ENCODE measurements at regions of chr4 and their contacts with region 1.

Region 1: DNA sequence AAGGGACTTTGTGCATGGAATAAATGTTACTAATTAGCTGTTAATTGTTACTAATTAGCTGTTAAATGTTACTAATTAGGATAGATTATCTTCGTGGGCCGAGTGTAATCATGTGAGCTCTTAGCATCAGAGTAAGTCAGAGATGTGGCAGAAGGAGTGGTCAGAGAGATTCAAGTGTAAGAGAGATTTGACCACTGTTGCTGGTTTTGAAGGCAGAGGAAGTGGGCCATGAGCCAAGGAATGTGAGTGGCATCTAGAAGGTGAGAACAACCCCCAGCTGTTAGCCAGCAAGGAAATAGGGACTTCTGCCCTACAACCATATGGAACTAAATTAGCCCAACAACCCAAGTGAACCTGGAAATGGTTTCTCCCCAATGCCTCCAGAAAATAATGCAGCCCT is 28.2 kb downstream of the ODAPH start:
- DNase-seq: no peak
- H3K4me3 ChIP-seq: no peak overlapping the region
- H3K27ac ChIP-seq: no peak overlapping the region
- H3K27me3 ChIP-seq: no peaks in the 10 kb centered on the region
- CTCF ChIP-seq: no peak

Region 2: DNA sequence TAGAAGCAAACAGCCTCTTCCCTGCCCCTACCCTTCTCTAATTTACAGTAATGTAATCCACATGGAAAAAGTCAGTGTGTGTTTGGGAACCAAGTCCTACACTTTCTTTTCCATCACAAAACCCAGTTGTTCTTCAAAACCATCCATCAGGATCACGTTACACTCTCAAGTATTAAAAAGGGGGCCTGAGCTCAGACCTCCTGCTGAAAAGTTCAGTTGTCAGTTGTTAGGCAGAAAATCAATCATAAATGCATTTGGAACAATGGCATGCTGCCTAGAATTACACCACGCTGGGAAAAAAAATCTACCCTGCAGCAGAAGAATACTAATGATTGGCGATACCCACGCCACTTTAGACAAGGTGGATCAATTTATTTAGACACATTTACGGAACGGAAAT is 414.6 kb before region 1 on chr4:
- intact Hi-C with region 1: no loop called
- DNase-seq: no peak
- H3K4me3 ChIP-seq: no peak overlapping the region
- H3K27ac ChIP-seq: no peak overlapping the region
- H3K27me3 ChIP-seq: no peaks in the 10 kb centered on the region
- CTCF ChIP-seq: no peak

Region 3: GRCh38 chr4:75849461-75849860 is 265.4 kb after region 1 on chr4:
- intact Hi-C with region 1: loop called in 1 of 2 experiments (anchors 5 kb)
- DNase-seq: no peak
- H3K4me3 ChIP-seq: no peak overlapping the region
- H3K27ac ChIP-seq: no peak overlapping the region
- H3K27me3 ChIP-seq: no peaks in the 10 kb centered on the region
- CTCF ChIP-seq: no peak